ENCODE measurements at regions of chr16 and their contacts with region 1.

Region 1: GRCh38 chr16:667780-668518 is at the start of gene RHOT2:
- DNase-seq: peak; percentile 93
- H3K4me3 Mint-ChIP-seq: peak within 1 kb of the TSS; percentile 80
- H3K27ac Mint-ChIP-seq: peak within 1 kb of the TSS; percentile 89
- H3K4me1 Mint-ChIP-seq: peaks cover 6% of the 10 kb centered on the region
- H3K27me3 Mint-ChIP-seq: no peaks in the 10 kb centered on the region
- total RNA-seq, gene RHOT2: 128 to 150 TPM

Region 2: DNA sequence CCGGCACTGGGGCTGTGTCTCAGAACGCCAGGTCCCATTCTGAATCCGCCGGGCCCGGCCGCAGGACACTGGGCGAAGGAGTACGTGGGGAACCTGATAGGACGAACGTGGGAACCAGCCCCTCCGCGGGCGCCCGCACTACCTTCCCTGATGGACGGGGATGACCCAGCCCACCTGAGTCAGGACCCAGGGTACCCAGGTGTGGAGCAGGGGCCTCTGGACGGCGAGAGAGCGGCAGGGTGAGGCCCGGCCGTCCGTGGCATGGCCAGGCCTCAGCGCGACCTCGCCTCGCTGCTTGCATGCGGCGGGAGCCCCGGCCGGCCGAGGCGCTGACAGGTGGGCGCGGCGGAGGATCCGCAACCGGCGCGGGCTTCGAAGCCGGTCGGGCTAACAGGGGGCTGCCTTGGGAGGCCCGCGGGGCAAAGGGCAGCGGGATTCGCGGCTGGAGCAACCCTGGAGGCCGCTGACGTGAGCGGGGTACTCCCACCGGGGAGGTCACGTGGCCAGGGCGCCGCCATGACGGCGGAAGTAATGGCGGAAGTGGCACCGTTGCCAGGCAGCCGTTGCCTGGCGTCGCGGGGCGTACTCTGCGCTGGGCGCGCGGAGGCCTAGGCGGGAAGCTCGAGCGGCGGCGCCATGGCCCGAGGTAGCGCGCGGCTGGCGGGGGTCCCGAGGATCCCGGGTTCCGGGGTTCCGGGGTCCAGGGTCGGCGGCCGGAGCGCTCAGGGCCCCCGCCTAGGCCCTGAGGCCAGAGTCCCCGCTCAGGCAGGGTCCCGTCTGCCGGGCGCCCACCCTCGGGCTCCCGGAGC is 19.0 kb before region 1 on chr16 and contains the start of gene WDR90:
- CTCF ChIA-PET with region 1: interaction called, 13 read pairs
- POLR2A ChIA-PET with region 1: interaction called, 3 read pairs
- DNase-seq: peak; percentile 94
- H3K4me3 Mint-ChIP-seq: peak within 1 kb of the TSS; percentile 73
- H3K27ac Mint-ChIP-seq: peak within 1 kb of the TSS; percentile 77
- H3K4me1 Mint-ChIP-seq: peaks cover 22% of the 10 kb centered on the region
- H3K27me3 Mint-ChIP-seq: no peaks in the 10 kb centered on the region
- total RNA-seq, gene WDR90: 54.9 to 81.6 TPM